Activated B cell treated with CpG ODN at 0.5 μM for 24 hours (primary cell): ENCODE measurements at regions of chr3 and their contacts with region 1.

Region 1: GRCh38 chr3:153443961-153444360 is 281.9 kb downstream of the RAP2B start:
- DNase-seq: no peak
- ATAC-seq: no peak
- H3K4me3 Mint-ChIP-seq: no peak overlapping the region
- H3K27ac Mint-ChIP-seq: no peak overlapping the region
- H3K4me1 Mint-ChIP-seq: no peaks in the 10 kb centered on the region
- H3K27me3 Mint-ChIP-seq: peaks cover 1% of the 10 kb centered on the region
- CTCF ChIP-seq: no peak

Region 2: DNA sequence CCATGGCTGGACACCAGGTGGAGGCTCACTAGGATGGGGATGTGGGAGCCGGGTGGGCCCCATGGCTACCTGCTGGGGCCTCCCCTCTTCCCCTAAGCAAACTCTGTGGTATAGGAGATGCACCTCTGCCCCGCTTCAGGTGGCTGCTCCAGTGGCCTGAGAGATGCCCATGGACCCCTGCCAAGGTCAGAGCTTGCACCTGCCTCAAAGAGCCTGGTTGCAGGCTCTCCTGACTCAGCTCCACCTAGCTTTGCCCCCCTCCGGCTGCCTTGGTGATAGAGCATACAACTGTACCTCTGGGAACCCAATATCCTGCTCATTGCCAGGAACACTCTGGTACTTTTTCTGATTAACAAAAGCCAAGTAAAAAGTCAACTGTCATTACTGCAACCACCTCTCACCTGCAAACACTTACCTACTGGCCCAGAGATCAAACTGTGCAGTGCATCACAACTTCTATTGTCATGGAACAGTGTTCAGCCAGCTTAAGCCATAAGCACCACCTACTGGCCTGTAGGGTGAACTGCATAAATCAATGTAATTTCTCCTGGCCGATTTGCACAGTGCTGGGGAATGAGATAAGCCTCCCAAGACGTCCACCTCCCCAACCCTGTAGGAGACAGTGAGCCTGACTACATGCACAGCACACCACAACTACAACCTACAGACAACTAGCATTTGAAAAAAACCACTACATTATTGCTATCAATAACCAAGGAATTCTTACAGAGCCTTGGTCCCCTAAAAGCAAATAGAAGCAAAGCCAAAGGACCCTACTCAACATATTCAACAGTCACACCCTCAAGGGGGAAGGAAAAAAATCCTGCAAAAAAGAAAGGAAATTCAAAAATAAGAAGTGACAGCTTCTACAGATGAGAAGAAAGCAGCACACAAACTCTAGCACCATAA is 324.9 kb after region 1 on chr3:
- CTCF ChIA-PET with region 1: no interaction called
- POLR2A ChIA-PET with region 1: no interaction called
- intact Hi-C with region 1: loop called (anchors 10 kb)
- DNase-seq: no peak
- ATAC-seq: peak; percentile 77
- H3K4me3 Mint-ChIP-seq: no peak overlapping the region
- H3K27ac Mint-ChIP-seq: no peak overlapping the region
- H3K4me1 Mint-ChIP-seq: no peaks in the 10 kb centered on the region
- H3K27me3 Mint-ChIP-seq: peaks cover 3% of the 10 kb centered on the region
- CTCF ChIP-seq: peak; percentile 15